IMR-90 (cell line): ENCODE measurements at regions of chr11 and their contacts with region 1.

Region 1: DNA sequence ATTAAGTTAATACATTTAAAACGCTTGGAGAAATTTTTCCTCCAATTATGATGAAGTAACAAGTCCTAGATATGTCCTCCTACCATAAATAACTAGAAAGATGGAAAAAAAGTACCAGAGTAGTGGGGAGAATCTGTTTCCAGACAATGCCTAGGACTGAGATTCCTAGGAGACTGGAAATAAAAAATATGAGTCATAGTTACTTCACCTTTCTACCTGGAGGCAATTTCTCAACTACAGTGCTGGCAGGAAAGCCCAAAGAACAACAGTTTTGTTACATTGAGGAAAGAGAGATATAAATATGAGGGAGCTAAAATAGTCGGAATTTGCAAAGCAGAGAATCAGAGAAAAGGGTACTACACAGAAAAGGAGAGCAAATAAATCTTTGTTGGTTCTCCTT is 202.1 kb upstream of the ARHGAP42 start:
- DNase-seq: no peak
- ATAC-seq: no peak
- H3K4me3 ChIP-seq: no peak overlapping the region
- H3K27ac ChIP-seq: no peak overlapping the region
- H3K4me1 ChIP-seq: no peaks in the 10 kb centered on the region
- H3K27me3 ChIP-seq: no peaks in the 10 kb centered on the region
- CTCF ChIP-seq: no peak
- POLR2A ChIP-seq: no peak
- RAD21 ChIP-seq: no peak

Region 2: DNA sequence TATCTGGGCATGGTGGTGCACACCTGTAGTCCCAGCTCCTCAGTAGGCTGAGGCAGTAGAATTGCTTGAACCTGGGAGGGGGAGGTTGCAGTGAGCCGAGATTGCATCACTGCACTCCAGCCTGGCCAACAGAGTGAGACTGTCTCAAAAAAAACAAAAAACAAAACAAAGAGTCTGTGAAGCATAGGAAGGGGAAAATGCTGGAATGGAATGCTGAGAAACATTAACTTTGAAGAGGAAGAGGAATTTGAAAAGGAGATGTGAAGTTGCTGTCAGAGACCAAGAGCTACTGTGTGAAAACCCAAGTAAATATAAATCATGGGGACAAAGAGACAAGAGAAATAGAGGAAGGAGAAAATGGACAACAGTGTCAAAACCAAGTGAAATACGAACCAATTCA is 252.9 kb before region 1 on chr11:
- CTCF ChIA-PET with region 1: no interaction called
- POLR2A ChIA-PET with region 1: no interaction called
- dilution Hi-C with region 1: no loop called
- in situ Hi-C with region 1: no loop called
- intact Hi-C with region 1: loop called (anchors 10 kb)
- DNase-seq: no peak
- ATAC-seq: no peak
- H3K4me3 ChIP-seq: no peak overlapping the region
- H3K27ac ChIP-seq: no peak overlapping the region
- H3K4me1 ChIP-seq: no peaks in the 10 kb centered on the region
- H3K27me3 ChIP-seq: no peaks in the 10 kb centered on the region
- CTCF ChIP-seq: no peak
- POLR2A ChIP-seq: no peak
- RAD21 ChIP-seq: no peak